ENCODE measurements at regions of chr4 and their contacts with region 1.

Region 1: GRCh38 chr4:175066923-175067627 is 148.9 kb downstream of the ADAM29 start:
- DNase-seq: peak; percentile 43
- H3K4me3 ChIP-seq: peak overlapping the region; percentile 1
- H3K27ac ChIP-seq: peak overlapping the region; percentile 56
- H3K4me1 ChIP-seq: peaks cover 22% of the 10 kb centered on the region
- CTCF ChIP-seq: no peak

Region 2: DNA sequence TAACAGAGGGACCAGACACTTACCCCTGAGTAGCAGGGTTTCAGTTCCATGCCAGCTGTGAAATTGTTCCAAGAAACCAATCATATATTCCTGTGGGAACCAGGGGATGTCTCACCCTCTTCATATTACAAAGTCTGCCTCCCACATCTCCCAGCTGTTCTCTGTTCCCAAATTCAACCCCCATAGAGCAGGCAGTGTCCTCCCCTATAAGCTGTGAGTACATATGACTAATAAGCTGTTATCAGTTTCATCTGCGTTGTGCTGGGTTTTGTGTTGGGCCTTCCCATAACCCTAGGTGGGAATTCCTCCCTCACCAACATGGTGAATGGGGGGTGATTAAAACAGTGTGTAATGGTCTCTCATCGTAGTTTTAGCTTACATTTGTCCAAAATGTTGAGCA is 742.4 kb before region 1 on chr4:
- CTCF ChIA-PET with region 1: no interaction called
- POLR2A ChIA-PET with region 1: no interaction called
- intact Hi-C with region 1: no loop called
- DNase-seq: no peak
- H3K4me3 ChIP-seq: no peak overlapping the region
- H3K27ac ChIP-seq: no peak overlapping the region
- H3K4me1 ChIP-seq: no peaks in the 10 kb centered on the region
- CTCF ChIP-seq: no peak

Region 3: DNA sequence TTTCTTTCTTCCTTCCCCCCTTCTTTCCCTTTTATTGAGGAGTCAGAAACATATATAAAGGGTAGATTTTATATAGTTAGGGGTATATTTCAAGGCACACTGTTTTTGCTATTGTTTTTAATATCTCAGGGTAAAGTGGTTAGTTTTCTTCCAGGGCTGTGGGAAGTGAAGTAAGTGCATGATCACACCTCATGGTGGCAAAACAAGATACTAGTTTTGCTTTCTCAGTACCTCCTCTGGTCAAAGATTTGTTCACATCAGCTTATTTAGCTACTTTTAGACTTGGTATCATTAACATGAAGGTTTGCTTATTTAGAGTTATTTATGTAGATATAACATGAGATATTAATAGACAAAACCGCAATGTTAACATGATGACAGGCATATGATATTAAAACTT is 127.1 kb before region 1 on chr4:
- CTCF ChIA-PET with region 1: no interaction called
- POLR2A ChIA-PET with region 1: no interaction called
- intact Hi-C with region 1: no loop called
- DNase-seq: no peak
- H3K4me3 ChIP-seq: no peak overlapping the region
- H3K27ac ChIP-seq: no peak overlapping the region
- H3K4me1 ChIP-seq: no peaks in the 10 kb centered on the region
- CTCF ChIP-seq: no peak

Region 4: DNA sequence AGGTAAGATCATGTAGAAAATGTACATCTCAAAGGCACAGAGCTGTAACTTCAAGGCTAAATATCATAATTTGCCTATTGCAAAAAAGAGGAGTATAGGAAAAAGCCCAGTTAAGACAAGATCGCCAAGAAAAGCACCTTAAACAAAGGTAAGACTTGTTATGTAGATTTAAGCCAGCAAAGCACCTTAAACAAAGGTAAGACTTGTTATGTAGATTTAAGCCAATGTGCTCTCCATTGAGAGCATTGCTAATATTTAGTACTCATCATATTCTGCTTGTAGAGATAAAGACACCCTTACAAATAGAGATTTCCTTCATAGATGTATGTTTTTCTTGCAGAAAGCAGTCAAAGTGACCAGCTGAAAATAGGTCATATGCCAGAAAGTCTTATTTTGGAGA is 33.1 kb before region 1 on chr4:
- CTCF ChIA-PET with region 1: no interaction called
- POLR2A ChIA-PET with region 1: no interaction called
- intact Hi-C with region 1: no loop called
- DNase-seq: no peak
- H3K4me3 ChIP-seq: no peak overlapping the region
- H3K27ac ChIP-seq: no peak overlapping the region
- H3K4me1 ChIP-seq: peaks cover 4% of the 10 kb centered on the region
- CTCF ChIP-seq: no peak

Region 5: GRCh38 chr4:175054980-175055379 is 12.1 kb before region 1 on chr4:
- CTCF ChIA-PET with region 1: no interaction called
- POLR2A ChIA-PET with region 1: interaction called, 14 read pairs
- intact Hi-C with region 1: no loop called
- DNase-seq: peak; percentile 10
- H3K4me3 ChIP-seq: no peak overlapping the region
- H3K27ac ChIP-seq: no peak overlapping the region
- H3K4me1 ChIP-seq: no peaks in the 10 kb centered on the region
- CTCF ChIP-seq: peak; percentile 55; the same call in 1 of the 2 replicates

Measured in OCI-LY7 (cell line).